ENCODE measurements at regions of chr10 and their contacts with region 1.

Region 1: GRCh38 chr10:97072851-97073665 is 112.7 kb downstream of the SLIT1 start:
- DNase-seq: peak; percentile 89
- H3K4me3 Mint-ChIP-seq: no peak overlapping the region
- H3K27ac Mint-ChIP-seq: no peak overlapping the region
- H3K4me1 Mint-ChIP-seq: peaks cover 13% of the 10 kb centered on the region
- H3K27me3 Mint-ChIP-seq: peaks cover 15% of the 10 kb centered on the region

Region 2: DNA sequence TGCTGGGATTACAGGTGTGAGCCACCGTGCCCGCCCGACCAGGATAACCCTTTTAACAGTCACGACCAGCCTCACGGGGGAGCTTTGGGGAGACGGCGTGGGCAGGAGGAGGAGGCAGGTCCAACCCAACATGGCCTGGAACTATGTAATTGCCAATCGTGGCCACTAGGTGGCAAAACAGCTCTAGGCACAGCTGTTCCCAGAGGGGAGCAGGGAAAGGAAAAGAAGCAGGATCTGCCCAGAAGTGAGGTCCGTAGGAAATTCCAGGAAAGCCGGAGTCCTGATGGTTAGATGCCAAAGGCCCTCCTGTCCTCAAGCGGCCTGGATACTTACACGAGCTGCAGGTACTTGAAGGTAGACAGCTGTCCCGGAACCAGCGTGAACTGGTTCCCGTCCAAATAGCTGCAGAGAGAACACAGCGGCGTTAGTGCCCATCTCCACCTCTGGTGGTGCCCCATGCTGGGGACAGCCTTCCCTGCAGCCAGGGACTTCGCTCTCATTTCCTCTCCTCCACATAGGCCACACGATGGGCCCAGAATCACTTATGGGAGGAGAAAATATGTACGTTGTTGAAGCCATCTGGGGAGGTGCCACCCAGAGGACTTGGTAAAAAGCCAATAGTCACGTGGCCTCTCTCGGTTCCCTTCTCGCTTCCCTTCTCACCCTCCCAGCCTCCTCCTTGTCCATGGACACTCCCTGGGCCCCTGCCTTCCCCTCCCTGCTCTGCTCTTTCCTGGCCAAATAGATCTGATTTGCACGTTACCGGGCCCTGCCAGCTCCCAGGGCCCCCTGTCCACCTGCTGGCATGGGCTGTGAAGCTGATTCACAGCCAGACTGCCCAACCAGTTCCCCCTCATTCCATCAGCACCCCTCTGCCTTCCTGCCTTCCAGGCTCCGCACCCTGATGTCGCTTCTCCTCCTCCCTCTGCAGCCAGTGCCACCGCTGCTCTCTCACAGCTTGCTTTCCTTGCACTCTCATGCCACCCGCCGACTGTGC is 35.4 kb before region 1 on chr10:
- CTCF ChIA-PET with region 1: interaction called, 30 read pairs
- POLR2A ChIA-PET with region 1: no interaction called
- intact Hi-C with region 1: no loop called
- DNase-seq: peak; percentile 80
- H3K4me3 Mint-ChIP-seq: peak overlapping the region; percentile 49
- H3K27ac Mint-ChIP-seq: no peak overlapping the region
- H3K4me1 Mint-ChIP-seq: peaks cover 8% of the 10 kb centered on the region
- H3K27me3 Mint-ChIP-seq: peaks cover 8% of the 10 kb centered on the region

Region 3: DNA sequence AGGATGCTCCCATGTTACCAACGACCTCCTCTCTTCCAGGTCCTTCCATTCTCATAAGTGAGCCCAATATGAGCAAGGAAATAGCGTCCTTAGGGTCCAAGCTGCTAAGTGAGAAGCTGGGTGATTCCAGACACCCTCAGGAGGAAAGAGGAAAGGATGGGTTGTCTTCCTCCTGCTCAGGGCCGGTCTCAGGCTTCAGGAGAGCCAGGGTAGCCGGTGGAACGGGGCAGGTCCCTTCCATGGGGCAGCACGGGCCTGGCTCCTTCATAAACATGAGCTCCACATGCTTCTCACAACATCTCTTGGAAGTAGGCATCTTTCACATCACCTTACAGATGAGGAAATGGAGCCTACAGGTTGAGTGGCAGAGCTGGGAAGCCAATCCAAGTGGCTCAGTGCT is 100.0 kb after region 1 on chr10:
- CTCF ChIA-PET with region 1: interaction called, 14 read pairs
- POLR2A ChIA-PET with region 1: no interaction called
- intact Hi-C with region 1: no loop called
- DNase-seq: no peak
- H3K4me3 Mint-ChIP-seq: no peak overlapping the region
- H3K27ac Mint-ChIP-seq: no peak overlapping the region
- H3K4me1 Mint-ChIP-seq: no peaks in the 10 kb centered on the region
- H3K27me3 Mint-ChIP-seq: peaks cover 13% of the 10 kb centered on the region

Region 4: GRCh38 chr10:97210543-97210961 is 137.5 kb after region 1 on chr10:
- CTCF ChIA-PET with region 1: interaction called, 364 read pairs
- POLR2A ChIA-PET with region 1: interaction called, 3 read pairs
- intact Hi-C with region 1: loop called (anchors 1 kb)
- DNase-seq: peak; percentile 81
- H3K4me3 Mint-ChIP-seq: no peak overlapping the region
- H3K27ac Mint-ChIP-seq: no peak overlapping the region
- H3K4me1 Mint-ChIP-seq: no peaks in the 10 kb centered on the region
- H3K27me3 Mint-ChIP-seq: no peaks in the 10 kb centered on the region

Region 5: DNA sequence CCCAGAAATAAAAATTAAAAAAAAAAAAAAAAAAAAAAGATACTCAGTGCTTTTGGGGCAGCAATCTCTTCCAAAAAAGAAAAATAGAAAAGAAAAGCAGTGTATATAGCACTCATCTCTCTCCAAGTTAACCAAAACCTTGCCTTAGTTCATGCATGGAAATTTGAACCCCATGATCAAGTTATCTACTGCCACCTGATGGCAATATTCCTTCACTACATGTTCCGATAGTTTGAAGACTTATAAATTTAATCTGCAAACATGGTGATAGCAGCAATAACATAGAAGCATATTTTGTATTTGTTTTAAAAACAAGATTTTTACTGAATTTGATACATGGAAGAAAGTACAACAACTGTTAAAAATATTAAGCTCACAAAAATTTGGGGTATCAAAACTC is 161.3 kb after region 1 on chr10:
- CTCF ChIA-PET with region 1: interaction called, 81 read pairs
- POLR2A ChIA-PET with region 1: interaction called, 3 read pairs
- intact Hi-C with region 1: loop called (anchors 1 kb)
- DNase-seq: no peak
- H3K4me3 Mint-ChIP-seq: no peak overlapping the region
- H3K27ac Mint-ChIP-seq: no peak overlapping the region
- H3K4me1 Mint-ChIP-seq: peaks cover 18% of the 10 kb centered on the region
- H3K27me3 Mint-ChIP-seq: no peaks in the 10 kb centered on the region

Region 6: DNA sequence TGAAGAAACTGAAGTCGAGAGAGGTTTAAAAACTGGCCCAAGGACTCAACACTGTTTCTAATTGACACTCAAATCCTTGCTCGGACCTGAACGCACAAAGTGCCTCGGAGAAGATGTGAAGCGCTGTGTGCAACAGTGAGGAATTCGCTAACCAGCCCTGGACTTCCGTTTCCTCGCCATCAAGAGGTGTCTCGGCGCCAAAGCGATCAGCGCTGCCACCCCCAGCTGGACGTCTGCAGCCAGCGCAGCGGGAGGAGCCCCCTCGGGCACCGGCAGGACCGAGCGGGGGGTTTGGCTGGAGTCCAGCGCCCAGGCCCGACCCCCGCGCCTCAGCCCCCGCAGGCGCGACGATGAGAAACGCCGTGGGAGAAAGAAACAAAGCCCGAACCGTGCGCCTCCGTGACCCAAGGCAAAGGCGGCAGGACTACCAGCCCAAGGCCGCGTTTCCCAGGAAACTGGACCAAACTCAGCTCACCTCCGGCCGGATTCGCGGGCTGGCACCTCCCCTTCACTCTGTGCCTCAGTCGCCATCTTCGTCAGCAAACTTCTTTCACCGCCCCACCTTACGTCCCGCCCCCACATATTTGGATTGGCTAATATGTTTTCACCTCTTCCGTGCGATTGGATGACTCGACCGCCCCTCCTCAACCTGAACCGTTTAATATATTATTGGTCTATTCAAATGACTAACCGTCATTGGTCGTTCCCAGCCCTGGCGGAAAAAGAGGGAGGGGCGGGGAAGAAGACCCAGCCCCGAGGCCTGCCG is 219.2 kb after region 1 on chr10 and contains the start of gene ARHGAP19:
- CTCF ChIA-PET with region 1: interaction called, 4 read pairs
- POLR2A ChIA-PET with region 1: no interaction called
- intact Hi-C with region 1: loop called (anchors 2 kb)
- DNase-seq: peak; percentile 97
- H3K4me3 Mint-ChIP-seq: peak within 1 kb of the TSS; percentile 94
- H3K27ac Mint-ChIP-seq: peak within 1 kb of the TSS; percentile 87
- H3K4me1 Mint-ChIP-seq: peaks cover 21% of the 10 kb centered on the region
- H3K27me3 Mint-ChIP-seq: no peaks in the 10 kb centered on the region
- total RNA-seq, gene ARHGAP19: 53.2 to 54.2 TPM

Region 7: GRCh38 chr10:97475936-97476594 is 403.0 kb after region 1 on chr10:
- CTCF ChIA-PET with region 1: no interaction called
- POLR2A ChIA-PET with region 1: no interaction called
- intact Hi-C with region 1: no loop called
- DNase-seq: no peak
- H3K4me3 Mint-ChIP-seq: no peak overlapping the region
- H3K27ac Mint-ChIP-seq: no peak overlapping the region
- H3K4me1 Mint-ChIP-seq: no peaks in the 10 kb centered on the region
- H3K27me3 Mint-ChIP-seq: no peaks in the 10 kb centered on the region